Breast epithelium (tissue), 4 donors: ENCODE measurements at regions of chr18 and their contacts with region 1.

Region 1: DNA sequence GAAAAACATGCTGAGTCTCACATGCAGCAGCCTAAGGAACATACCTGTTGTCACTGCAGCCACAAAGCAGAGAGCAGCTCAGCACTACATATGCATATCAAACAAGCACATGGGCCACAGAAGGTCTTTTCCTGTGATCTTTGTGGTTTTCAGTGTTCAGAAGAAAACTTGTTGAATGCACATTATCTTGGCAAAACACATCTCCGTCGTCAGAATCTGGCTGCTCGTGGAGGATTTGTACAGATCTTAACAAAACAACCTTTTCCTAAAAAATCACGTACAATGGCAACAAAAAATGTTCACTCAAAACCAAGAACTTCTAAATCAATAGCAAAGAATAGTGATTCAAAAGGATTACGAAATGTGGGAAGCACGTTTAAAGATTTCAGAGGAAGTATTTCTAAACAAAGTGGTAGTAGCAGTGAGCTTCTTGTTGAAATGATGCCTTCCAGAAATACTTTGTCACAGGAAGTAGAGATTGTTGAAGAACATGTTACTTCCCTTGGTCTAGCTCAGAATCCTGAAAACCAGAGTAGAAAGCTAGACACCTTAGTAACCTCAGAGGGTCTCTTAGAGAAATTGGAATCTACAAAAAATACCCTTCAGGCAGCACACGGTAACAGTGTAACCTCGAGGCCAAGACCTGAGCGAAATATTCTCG is 34.1 kb downstream of the ZNF407 start:
- DNase-seq: no peak
- H3K4me3 ChIP-seq: no peak overlapping the region
- H3K27ac ChIP-seq: no peak overlapping the region
- H3K4me1 ChIP-seq: no peaks in the 10 kb centered on the region
- H3K27me3 ChIP-seq: no peaks in the 10 kb centered on the region
- CTCF ChIP-seq: no peak
- POLR2A ChIP-seq: no peak

Region 2: GRCh38 chr18:74196220-74197119 is 435.3 kb before region 1 on chr18:
- intact Hi-C with region 1: loop called (anchors 5 kb)
- DNase-seq: peak in 1 of 2 donors; percentile 33
- H3K4me3 ChIP-seq: peak overlapping the region in 2 of 3 donors; percentile 30 to 48
- H3K27ac ChIP-seq: peak overlapping the region; percentile 29 to 39
- H3K4me1 ChIP-seq: no peaks in the 10 kb centered on the region
- H3K27me3 ChIP-seq: no peaks in the 10 kb centered on the region
- CTCF ChIP-seq: peak; percentile 88 to 97 (median 90)
- POLR2A ChIP-seq: no peak